A673 (cell line): ENCODE measurements at regions of chr6 and their contacts with region 1.

Region 1: GRCh38 chr6:122530440-122531046 is 58.9 kb upstream of the SERINC1 start:
- DNase-seq: peak; percentile 81
- H3K4me3 ChIP-seq: no peak overlapping the region
- H3K27ac ChIP-seq: no peak overlapping the region
- H3K4me1 ChIP-seq: no peaks in the 10 kb centered on the region
- H3K27me3 ChIP-seq: no peaks in the 10 kb centered on the region
- CTCF ChIP-seq: peak; percentile 86

Region 2: DNA sequence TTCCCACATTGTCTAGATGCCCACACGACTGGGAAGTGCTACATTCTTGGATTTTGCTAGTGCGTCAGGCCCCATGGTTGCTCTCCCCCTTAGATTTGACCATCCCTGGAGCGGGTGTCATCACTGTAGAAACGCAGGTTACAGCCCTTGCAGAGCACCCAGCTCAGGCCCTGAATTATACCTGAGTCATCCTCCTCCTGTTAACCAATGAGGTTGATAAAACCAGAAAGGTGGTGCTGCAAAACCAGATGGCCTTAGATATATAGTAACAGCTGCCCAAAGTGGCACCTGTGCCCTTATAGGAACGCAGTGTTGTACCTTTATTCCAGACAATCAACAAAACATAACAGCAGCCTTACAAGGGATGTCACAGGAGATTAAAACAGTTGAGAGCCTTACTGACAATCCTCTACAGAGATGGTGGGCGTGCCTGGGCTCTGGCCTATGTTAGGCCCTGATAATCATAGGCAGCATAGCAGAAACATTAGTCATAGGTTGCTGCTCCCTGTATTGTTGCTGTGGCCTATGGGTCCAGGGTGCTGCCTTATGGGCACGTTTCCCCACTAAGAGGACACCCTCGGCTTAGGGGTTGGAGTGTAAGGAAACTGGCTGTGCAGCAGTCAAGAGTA is 164.7 kb before region 1 on chr6:
- CTCF ChIA-PET with region 1: no interaction called
- POLR2A ChIA-PET with region 1: no interaction called
- intact Hi-C with region 1: no loop called
- DNase-seq: peak; percentile 9
- H3K4me3 ChIP-seq: no peak overlapping the region
- H3K27ac ChIP-seq: no peak overlapping the region
- H3K4me1 ChIP-seq: peaks cover 2% of the 10 kb centered on the region
- H3K27me3 ChIP-seq: no peaks in the 10 kb centered on the region
- CTCF ChIP-seq: no peak

Region 3: DNA sequence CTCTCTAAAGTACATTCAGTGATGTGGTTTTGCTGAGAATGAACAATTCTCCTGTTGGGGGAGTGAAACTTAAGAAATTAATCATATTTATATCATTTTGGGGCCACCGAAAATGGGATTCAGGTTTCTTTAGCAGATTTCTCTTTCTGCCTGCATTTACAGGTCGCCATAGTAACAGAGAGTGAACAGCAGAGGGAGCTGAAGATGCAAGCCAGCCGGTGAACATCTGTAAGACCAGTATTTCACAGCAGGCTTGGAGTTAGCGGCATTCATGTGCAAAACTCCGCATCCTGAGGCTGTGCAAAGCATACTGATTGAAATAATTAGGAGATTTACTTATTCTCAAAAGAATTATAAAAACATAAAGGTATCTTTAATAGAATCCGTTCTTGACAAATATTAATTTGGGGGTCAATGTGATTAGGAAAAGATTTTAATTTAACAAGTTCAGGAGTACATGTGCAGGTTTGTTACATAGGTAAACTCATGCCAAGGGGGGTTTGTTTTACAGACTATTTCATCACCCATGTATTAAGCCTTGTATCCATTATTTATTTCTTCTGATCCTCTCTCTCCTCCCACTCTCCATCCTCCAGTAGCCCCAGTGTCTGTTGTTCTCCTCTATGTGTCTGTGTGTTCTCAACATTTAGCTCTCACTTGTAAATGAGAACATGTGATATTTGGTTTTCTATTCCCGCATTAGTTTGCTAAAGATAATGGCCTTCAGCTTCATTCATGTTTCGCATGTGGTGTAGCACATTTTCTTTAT is 148.9 kb before region 1 on chr6:
- CTCF ChIA-PET with region 1: interaction called, 11 read pairs
- POLR2A ChIA-PET with region 1: no interaction called
- intact Hi-C with region 1: loop called (anchors 1 kb)
- DNase-seq: peak; percentile 86
- H3K4me3 ChIP-seq: no peak overlapping the region
- H3K27ac ChIP-seq: no peak overlapping the region
- H3K4me1 ChIP-seq: peaks cover 4% of the 10 kb centered on the region
- H3K27me3 ChIP-seq: no peaks in the 10 kb centered on the region
- CTCF ChIP-seq: peak; percentile 82

Region 4: GRCh38 chr6:122476131-122476530 is 54.4 kb before region 1 on chr6:
- CTCF ChIA-PET with region 1: no interaction called
- POLR2A ChIA-PET with region 1: no interaction called
- intact Hi-C with region 1: loop called (anchors 5 kb)
- DNase-seq: peak; percentile 54
- H3K4me3 ChIP-seq: no peak overlapping the region
- H3K27ac ChIP-seq: no peak overlapping the region
- H3K4me1 ChIP-seq: no peaks in the 10 kb centered on the region
- H3K27me3 ChIP-seq: no peaks in the 10 kb centered on the region
- CTCF ChIP-seq: peak; percentile 65

Region 5: GRCh38 chr6:122491919-122492555 is 38.5 kb before region 1 on chr6:
- CTCF ChIA-PET with region 1: interaction called, 42 read pairs
- POLR2A ChIA-PET with region 1: no interaction called
- intact Hi-C with region 1: loop called (anchors 2 kb)
- DNase-seq: peak; percentile 89
- H3K4me3 ChIP-seq: no peak overlapping the region
- H3K27ac ChIP-seq: no peak overlapping the region
- H3K4me1 ChIP-seq: no peaks in the 10 kb centered on the region
- H3K27me3 ChIP-seq: no peaks in the 10 kb centered on the region
- CTCF ChIP-seq: peak; percentile 96

Region 6: DNA sequence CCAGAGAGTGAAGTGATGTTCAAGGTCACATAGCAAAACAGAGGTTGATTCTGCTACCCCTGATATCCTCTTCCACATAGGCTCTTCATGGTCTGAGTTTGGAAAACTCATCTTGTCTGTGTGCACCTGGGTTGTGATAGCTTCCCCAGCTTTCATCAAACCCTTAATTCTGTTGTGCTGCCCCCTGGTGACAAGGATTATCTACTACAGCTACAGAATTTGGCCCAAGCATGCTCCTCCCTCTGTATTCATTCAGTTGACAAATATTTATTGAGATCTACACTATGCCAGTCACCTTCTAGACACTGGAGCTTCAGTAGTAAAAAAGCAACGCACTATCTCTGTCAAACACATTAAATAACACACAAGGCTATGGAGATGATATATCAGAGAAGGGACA is 308.9 kb after region 1 on chr6:
- CTCF ChIA-PET with region 1: no interaction called
- POLR2A ChIA-PET with region 1: no interaction called
- intact Hi-C with region 1: no loop called
- DNase-seq: peak; percentile 89
- H3K4me3 ChIP-seq: peak overlapping the region; percentile 2
- H3K27ac ChIP-seq: no peak overlapping the region
- H3K4me1 ChIP-seq: peaks cover 27% of the 10 kb centered on the region
- H3K27me3 ChIP-seq: no peaks in the 10 kb centered on the region
- CTCF ChIP-seq: peak; percentile 78